ENCODE measurements at regions of chr4 and their contacts with region 1.

Region 1: GRCh38 chr4:146916479-146917076 is 29.1 kb downstream of the TTC29 start:
- DNase-seq: peak in 1 of 2 experiments; percentile 7
- H3K4me3 ChIP-seq: no peak overlapping the region
- H3K27ac ChIP-seq: no peak overlapping the region
- H3K4me1 ChIP-seq: no peaks in the 10 kb centered on the region
- H3K27me3 ChIP-seq: no peaks in the 10 kb centered on the region
- CTCF ChIP-seq: peak; percentile 81

Region 2: GRCh38 chr4:145216535-145216934 is 1700.0 kb before region 1 on chr4:
- CTCF ChIA-PET with region 1: no interaction called
- POLR2A ChIA-PET with region 1: no interaction called
- intact Hi-C with region 1: loop called (anchors 5 kb)
- DNase-seq: no peak
- H3K4me3 ChIP-seq: no peak overlapping the region
- H3K27ac ChIP-seq: no peak overlapping the region
- H3K4me1 ChIP-seq: no peaks in the 10 kb centered on the region
- H3K27me3 ChIP-seq: no peaks in the 10 kb centered on the region
- CTCF ChIP-seq: peak; percentile 67

Region 3: DNA sequence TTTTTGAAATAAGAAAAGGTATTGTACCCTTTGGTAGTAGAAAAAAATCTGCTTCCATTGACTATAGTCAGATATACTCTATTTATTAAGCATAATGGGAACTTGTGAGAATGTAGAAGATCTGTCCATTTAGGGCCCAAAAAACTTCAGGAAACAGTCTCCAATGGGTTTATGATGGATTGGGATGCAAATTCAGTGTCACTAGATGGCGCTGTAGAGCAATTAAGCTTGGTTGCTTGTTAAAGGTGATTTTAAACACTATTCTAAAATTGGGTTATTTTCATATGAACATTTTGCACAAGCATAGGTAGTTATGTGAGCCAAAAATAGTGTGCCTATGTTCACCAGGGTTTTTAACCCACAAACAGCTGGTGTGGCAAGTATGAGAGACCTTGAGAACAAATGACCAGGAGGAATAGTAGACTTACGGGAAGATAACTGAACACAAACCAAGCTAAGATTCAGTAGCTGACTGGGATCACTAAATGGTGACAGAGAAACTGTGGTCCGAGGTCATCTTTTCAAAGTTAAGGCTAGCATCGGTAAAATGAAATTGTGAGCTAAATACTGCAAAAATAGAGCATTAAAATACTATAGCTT is 821.4 kb before region 1 on chr4:
- CTCF ChIA-PET with region 1: no interaction called
- POLR2A ChIA-PET with region 1: no interaction called
- intact Hi-C with region 1: loop called (anchors 10 kb)
- DNase-seq: peak; percentile 20 to 41
- H3K4me3 ChIP-seq: no peak overlapping the region
- H3K27ac ChIP-seq: no peak overlapping the region
- H3K4me1 ChIP-seq: no peaks in the 10 kb centered on the region
- H3K27me3 ChIP-seq: no peaks in the 10 kb centered on the region
- CTCF ChIP-seq: peak; percentile 78

Region 4: GRCh38 chr4:146243141-146243882 is 673.3 kb before region 1 on chr4:
- CTCF ChIA-PET with region 1: no interaction called
- POLR2A ChIA-PET with region 1: no interaction called
- intact Hi-C with region 1: loop called (anchors 1 kb)
- DNase-seq: no peak
- H3K4me3 ChIP-seq: no peak overlapping the region
- H3K27ac ChIP-seq: no peak overlapping the region
- H3K4me1 ChIP-seq: peaks cover 33% of the 10 kb centered on the region
- H3K27me3 ChIP-seq: no peaks in the 10 kb centered on the region
- CTCF ChIP-seq: peak; percentile 32; the same call in 1 of the 2 replicates

Region 5: GRCh38 chr4:146522098-146522868 is 394.3 kb before region 1 on chr4:
- CTCF ChIA-PET with region 1: no interaction called
- POLR2A ChIA-PET with region 1: no interaction called
- intact Hi-C with region 1: loop called (anchors 10 kb)
- DNase-seq: peak; percentile 51 to 71
- H3K4me3 ChIP-seq: peak overlapping the region; percentile 95
- H3K27ac ChIP-seq: peak overlapping the region; percentile 83
- H3K4me1 ChIP-seq: peaks cover 15% of the 10 kb centered on the region
- H3K27me3 ChIP-seq: no peaks in the 10 kb centered on the region
- CTCF ChIP-seq: no peak

Region 6: GRCh38 chr4:146844761-146845160 is 71.8 kb before region 1 on chr4:
- CTCF ChIA-PET with region 1: no interaction called
- POLR2A ChIA-PET with region 1: no interaction called
- intact Hi-C with region 1: no loop called
- DNase-seq: no peak
- H3K4me3 ChIP-seq: no peak overlapping the region
- H3K27ac ChIP-seq: no peak overlapping the region
- H3K4me1 ChIP-seq: no peaks in the 10 kb centered on the region
- H3K27me3 ChIP-seq: no peaks in the 10 kb centered on the region
- CTCF ChIP-seq: no peak

Region 7: DNA sequence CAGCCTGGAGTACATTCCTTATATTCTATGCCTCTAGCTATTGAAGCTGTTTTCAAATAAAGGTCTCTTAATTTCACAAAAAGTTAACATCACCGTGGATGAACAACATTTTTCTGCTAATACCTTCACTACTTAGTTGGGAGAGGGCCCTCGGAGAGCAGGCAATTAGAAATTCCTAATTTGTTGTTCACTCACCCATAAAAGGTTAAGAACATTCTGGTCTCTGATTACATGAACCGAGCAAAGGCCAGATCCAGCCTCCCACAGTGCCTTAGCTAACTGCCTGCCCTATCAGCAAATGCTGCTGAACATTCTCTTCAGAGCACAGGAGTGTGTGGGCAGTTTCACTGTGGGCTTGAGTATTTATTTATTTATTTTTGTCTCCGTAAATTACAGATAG is 65.1 kb after region 1 on chr4:
- CTCF ChIA-PET with region 1: no interaction called
- POLR2A ChIA-PET with region 1: no interaction called
- intact Hi-C with region 1: no loop called
- DNase-seq: no peak
- H3K4me3 ChIP-seq: no peak overlapping the region
- H3K27ac ChIP-seq: no peak overlapping the region
- H3K4me1 ChIP-seq: no peaks in the 10 kb centered on the region
- H3K27me3 ChIP-seq: no peaks in the 10 kb centered on the region
- CTCF ChIP-seq: no peak

Region 8: DNA sequence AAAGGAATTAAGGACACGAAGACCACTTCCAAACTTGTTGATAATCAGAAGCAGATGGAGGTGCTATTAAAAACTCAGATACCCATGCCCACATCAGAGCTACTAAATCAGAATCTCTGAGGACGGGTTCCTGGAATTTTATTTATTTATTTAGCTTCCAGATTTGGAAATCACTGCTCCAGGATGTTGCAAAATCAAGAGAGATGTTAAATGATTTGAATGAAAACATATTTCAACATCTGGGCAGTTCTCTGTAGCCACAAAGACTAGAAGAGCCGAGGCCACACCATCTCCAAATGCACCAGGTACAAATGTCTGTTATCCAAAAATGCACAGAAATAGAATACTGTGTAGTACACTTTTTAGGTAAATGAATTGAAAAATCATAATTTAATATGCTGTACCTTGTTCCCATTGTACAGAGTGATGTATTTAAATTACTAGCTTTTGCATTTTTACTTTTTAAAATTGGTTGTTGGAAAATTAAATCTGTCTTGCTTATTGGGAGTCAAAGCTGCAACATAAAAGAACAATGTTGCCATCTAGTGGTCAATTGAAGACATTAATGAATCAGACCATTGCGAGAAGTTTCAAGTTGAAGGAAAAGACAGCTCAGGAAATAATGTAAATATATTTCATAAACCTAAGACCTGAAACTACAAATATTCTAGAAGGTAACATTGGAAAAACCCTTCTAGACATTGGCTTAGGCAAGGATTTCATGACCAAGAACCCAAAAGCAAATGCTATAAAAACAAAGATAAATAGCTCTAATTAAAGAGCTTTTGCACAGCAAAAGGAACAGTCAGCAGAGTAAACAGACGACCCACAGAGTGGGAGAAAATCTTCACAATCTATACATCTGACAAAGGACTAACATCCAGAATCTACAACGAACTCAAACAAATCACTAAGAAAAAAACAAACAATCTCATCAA is 180.4 kb after region 1 on chr4:
- CTCF ChIA-PET with region 1: no interaction called
- POLR2A ChIA-PET with region 1: no interaction called
- intact Hi-C with region 1: loop called (anchors 10 kb)
- DNase-seq: peak in 1 of 2 experiments; percentile 36
- H3K4me3 ChIP-seq: no peak overlapping the region
- H3K27ac ChIP-seq: no peak overlapping the region
- H3K4me1 ChIP-seq: no peaks in the 10 kb centered on the region
- H3K27me3 ChIP-seq: no peaks in the 10 kb centered on the region
- CTCF ChIP-seq: peak; percentile 78

Measured in PC-9 (cell line).